AG04449 (cell line): ENCODE measurements at regions of chr15 and their contacts with region 1.

Region 1: GRCh38 chr15:90886041-90886614 is 1.8 kb downstream of the FES start:
- DNase-seq: no peak
- H3K4me3 ChIP-seq: no peak overlapping the region
- CTCF ChIP-seq: peak; percentile 95

Region 2: DNA sequence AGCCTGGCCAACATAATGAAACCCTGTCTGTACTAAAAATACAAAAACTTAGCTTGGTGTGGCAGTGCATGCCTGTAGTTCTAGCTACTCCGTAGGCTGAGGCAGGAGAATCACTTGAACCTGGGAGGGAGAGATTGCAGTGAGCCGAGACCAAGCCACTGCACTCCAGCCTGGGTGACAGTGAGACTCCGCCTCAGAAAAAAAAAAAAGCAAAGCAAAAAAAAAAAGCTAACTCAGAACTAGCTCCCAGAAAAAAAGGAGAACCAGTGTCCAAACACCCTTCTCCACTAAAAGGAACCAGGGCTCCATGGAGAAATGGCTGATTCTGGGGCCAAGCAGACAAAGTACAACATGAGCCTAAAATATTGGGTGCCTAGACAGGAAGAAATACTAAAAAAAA is 373.1 kb before region 1 on chr15:
- CTCF ChIA-PET with region 1: interaction called, 10 read pairs
- POLR2A ChIA-PET with region 1: no interaction called
- DNase-seq: no peak
- H3K4me3 ChIP-seq: no peak overlapping the region
- CTCF ChIP-seq: no peak

Region 3: GRCh38 chr15:90637693-90638092 is 248.4 kb before region 1 on chr15:
- CTCF ChIA-PET with region 1: interaction called, 11 read pairs
- POLR2A ChIA-PET with region 1: no interaction called
- DNase-seq: no peak
- H3K4me3 ChIP-seq: no peak overlapping the region
- CTCF ChIP-seq: no peak

Region 4: GRCh38 chr15:90660195-90660998 is 225.7 kb before region 1 on chr15:
- CTCF ChIA-PET with region 1: interaction called, 13 read pairs
- POLR2A ChIA-PET with region 1: no interaction called
- DNase-seq: peak; percentile 64
- H3K4me3 ChIP-seq: no peak overlapping the region; the same call in 1 of the 2 replicates
- CTCF ChIP-seq: no peak

Region 5: DNA sequence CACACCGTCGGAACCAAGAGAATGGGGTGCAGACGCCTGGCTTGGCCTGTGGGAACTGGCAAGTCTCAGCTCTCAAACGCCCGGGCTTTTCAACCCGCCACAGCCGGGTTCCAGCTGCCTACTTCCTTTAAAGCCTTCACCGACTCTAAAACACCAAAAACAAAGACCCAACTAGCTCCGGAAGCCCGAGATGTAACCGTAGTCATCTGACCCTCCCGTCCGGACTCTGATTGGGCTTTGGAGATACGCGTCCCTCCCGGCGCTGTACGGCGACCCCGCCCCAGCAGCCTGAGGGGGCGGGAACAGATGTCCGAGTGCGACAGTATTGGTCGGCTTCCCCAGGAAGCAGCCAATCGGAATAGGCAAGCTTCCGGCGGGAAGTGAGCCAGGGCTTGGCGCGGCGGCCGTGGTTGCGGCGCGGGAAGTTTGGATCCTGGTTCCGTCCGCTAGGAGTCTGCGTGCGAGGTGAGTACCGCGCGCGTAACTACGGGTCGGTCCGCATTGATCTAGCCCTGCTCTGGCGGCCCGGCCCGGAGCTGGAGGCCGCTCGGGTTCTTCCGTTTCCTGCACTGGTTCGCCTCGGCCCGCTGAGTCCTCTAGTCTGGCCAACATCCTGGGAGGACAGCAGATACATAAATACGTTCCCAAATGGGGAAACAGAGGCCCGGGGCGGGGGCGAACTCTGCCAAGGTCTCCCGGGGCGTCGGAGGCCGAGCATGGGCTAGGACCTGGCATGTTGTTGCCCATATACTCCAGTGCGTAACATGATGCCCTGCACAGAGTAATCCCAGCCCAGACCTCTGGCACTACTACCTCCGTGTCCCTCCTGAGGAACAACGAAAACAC is 168.9 kb before region 1 on chr15 and contains the start of gene BLM:
- CTCF ChIA-PET with region 1: interaction called, 10 read pairs
- POLR2A ChIA-PET with region 1: no interaction called
- DNase-seq: peak; percentile 83
- H3K4me3 ChIP-seq: peak within 1 kb of the TSS; percentile 89
- CTCF ChIP-seq: peak; percentile 26

Region 6: GRCh38 chr15:90875549-90876370 is 10.4 kb before region 1 on chr15:
- CTCF ChIA-PET with region 1: interaction called, 38 read pairs
- POLR2A ChIA-PET with region 1: no interaction called
- DNase-seq: no peak
- H3K4me3 ChIP-seq: no peak overlapping the region
- CTCF ChIP-seq: no peak

Region 7: DNA sequence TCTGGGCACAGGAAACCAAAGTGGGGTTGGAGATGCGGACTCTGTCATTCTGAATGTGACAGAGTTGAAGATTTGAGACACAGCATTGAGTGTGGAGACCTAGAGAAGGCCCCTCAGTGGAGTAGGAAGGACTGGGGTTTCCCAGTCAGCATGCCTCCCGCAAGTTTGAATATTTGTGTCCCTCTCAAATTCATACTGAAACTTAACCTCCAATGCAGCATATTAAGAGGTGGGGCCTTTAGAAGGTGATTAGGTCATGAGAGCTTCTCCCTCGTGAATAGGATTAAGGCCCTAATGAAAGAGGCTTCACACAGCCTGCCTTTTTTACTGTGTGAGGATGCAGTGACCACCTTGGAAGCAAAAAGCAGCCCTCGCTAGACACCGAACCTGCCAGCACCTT is 38.2 kb after region 1 on chr15:
- CTCF ChIA-PET with region 1: interaction called, 10 read pairs
- POLR2A ChIA-PET with region 1: no interaction called
- DNase-seq: no peak
- H3K4me3 ChIP-seq: no peak overlapping the region
- CTCF ChIP-seq: no peak